ENCODE measurements at regions of chr5 and their contacts with region 1.

Region 1: GRCh38 chr5:126339215-126339805 is 83.9 kb upstream of the GRAMD2B start:
- DNase-seq: peak in 1 of 2 donors; percentile 46
- H3K4me3 ChIP-seq: no peak overlapping the region
- H3K27ac ChIP-seq: no peak overlapping the region
- H3K4me1 ChIP-seq: peaks cover 0 to 20% (median 6%) of the 10 kb centered on the region in 4 donors
- H3K27me3 ChIP-seq: no peaks in the 10 kb centered on the region
- CTCF ChIP-seq: peak; percentile 84 to 90

Region 2: DNA sequence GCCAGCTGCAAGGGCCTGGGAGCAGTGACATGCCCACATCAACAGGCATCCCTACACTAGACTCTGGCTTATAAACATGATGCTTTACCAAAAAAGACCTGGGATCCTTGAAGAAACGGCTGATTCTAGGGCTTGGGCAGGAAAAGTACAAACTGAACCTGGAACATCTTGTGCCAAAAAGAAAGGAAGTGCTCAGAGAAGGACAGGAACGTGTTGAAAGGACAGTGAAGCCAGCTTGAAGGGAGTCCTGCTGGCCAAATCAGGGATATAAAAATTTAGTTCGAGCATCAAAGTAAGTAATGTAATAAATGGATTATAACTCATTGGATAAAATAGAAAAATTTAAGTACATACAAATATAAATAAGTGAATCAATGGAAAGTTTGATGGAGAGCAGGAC is 197.6 kb after region 1 on chr5:
- intact Hi-C with region 1: loop called (anchors 5 kb)
- DNase-seq: no peak
- H3K4me3 ChIP-seq: no peak overlapping the region
- H3K27ac ChIP-seq: no peak overlapping the region
- H3K4me1 ChIP-seq: peaks cover 0 to 16% (median 6%) of the 10 kb centered on the region in 4 donors
- H3K27me3 ChIP-seq: no peaks in the 10 kb centered on the region
- CTCF ChIP-seq: peak in 1 of 2 experiments; percentile 13

Region 3: GRCh38 chr5:126600631-126601511 is 261.6 kb after region 1 on chr5 and contains the start of gene PHAX:
- intact Hi-C with region 1: loop called (anchors 5 kb)
- DNase-seq: peak; percentile 58 to 84
- H3K4me3 ChIP-seq: peak within 1 kb of the TSS; percentile 99
- H3K27ac ChIP-seq: peak within 1 kb of the TSS; percentile 87
- H3K4me1 ChIP-seq: peaks cover 0 to 44% (median 24%) of the 10 kb centered on the region in 4 donors
- H3K27me3 ChIP-seq: no peaks in the 10 kb centered on the region
- CTCF ChIP-seq: peak; percentile 22 to 65

Measured in tibial artery (tissue), 4 donors.